A549 (cell line): ENCODE measurements at regions of chr9 and their contacts with region 1.

Region 1: GRCh38 chr9:35882263-35882848 is 12.2 kb upstream of the OR13J1 start:
- DNase-seq: peak; percentile 76 to 87
- ATAC-seq: peak; percentile 90 to 96; a peak in 5 of 6 replicates
- H3K4me3 ChIP-seq: no peak overlapping the region
- H3K27ac ChIP-seq: no peak overlapping the region
- H3K4me1 ChIP-seq: peaks cover 4% of the 10 kb centered on the region; the same call in 1 of the 3 replicates
- CTCF ChIP-seq: peak; percentile 97
- EP300 ChIP-seq: no peak
- POLR2A ChIP-seq: no peak
- RAD21 ChIP-seq: peak; percentile 86 to 87

Region 2: GRCh38 chr9:35732122-35732799 is 150.1 kb before region 1 on chr9 and contains the starts of genes CREB3 and TLN1:
- CTCF ChIA-PET with region 1: interaction called, 11 read pairs
- POLR2A ChIA-PET with region 1: interaction called, 3 read pairs
- DNase-seq: peak; percentile 98 to 99
- ATAC-seq: peak; percentile 82 to 93
- H3K4me3 ChIP-seq: peak within 1 kb of the TSS; percentile 87
- H3K27ac ChIP-seq: peak within 1 kb of the TSS; percentile 95 to 96
- H3K4me1 ChIP-seq: peaks cover 52% of the 10 kb centered on the region
- CTCF ChIP-seq: peak; percentile 40
- EP300 ChIP-seq: no peak
- POLR2A ChIP-seq: peak; percentile 64
- RAD21 ChIP-seq: peak in 1 of 2 experiments; percentile 36; a peak in 2 of 5 replicates
- polyA plus RNA-seq, gene CREB3: 33.3 and 36.0 TPM in 2 replicates
- polyA plus RNA-seq, gene TLN1: 65.5 and 72.1 TPM in 2 replicates

Region 3: DNA sequence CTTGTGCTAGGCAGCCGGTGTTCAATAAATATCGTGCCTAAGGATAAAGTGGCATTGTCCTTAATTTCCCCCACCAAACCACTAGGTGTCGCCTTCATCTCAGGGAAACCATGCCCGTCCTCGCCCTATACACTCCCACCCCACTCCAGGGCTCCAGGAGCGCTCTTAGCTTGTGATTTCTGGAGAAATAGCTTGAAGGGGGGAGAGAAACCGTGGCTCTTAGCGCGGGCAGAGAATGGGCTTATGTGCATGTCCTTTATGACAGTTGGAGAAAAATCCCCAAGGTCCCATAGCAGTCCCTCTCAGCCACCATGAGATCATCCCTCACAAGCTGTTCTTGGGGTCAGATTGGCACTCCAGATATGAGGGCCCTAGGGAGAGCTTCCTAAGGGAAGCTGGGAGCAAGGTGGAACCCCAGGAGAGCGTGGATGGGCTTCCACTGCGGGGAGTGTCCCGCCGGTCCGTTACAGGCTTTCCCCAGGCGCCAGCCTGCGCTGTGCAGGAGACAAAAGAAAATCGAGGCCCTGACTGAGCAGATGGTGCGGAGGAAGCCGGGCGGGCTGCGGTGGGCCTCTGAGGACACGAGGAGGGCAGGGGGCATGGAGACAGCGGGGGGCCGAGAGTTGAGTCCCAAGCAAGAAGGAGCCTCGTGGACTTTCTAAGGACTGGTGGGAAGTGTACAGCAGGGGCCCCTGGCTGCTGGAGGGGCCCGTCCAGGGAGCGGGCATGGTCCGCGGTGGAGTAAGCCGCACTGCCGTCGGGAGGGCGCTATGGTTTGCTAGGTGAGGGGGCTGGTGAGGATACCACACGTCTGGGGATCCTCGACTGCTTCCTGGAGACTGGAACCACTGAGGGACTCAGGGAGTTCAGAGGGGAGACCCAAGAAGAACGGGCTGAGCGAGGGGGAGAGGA is 91.7 kb before region 1 on chr9:
- CTCF ChIA-PET with region 1: interaction called, 66 read pairs
- POLR2A ChIA-PET with region 1: interaction called, 4 read pairs
- DNase-seq: peak; percentile 65 to 85
- ATAC-seq: peak; percentile 87 to 97
- H3K4me3 ChIP-seq: no peak overlapping the region
- H3K27ac ChIP-seq: peak overlapping the region in 1 of 2 experiments; percentile 22; a peak in 1 of 6 replicates
- H3K4me1 ChIP-seq: peaks cover 9% of the 10 kb centered on the region
- CTCF ChIP-seq: peak; percentile 91
- EP300 ChIP-seq: no peak
- POLR2A ChIP-seq: no peak
- RAD21 ChIP-seq: peak; percentile 85 to 92

Region 4: DNA sequence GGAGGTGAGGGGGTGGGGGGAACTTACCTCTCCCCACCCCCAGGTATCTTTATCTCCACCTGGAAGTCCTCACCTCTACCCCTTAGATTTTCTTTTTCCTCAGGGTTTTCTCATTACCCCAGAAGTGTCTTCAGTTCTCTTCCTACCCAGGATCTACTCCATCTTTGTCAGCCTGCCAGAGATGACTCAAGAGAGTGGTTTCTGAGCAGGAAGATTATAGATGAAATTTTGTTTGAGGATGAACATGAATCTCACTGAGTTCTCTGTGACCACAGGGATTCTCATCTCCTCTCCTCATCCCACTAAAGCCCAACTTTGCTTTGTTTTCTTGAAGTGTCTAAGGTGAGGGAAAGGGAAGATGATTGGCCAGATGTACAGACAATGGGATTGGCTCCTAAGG is 62.3 kb before region 1 on chr9:
- CTCF ChIA-PET with region 1: interaction called, 28 read pairs
- POLR2A ChIA-PET with region 1: no interaction called
- DNase-seq: no peak
- ATAC-seq: no peak
- H3K4me3 ChIP-seq: no peak overlapping the region
- H3K27ac ChIP-seq: no peak overlapping the region
- H3K4me1 ChIP-seq: no peaks in the 10 kb centered on the region
- CTCF ChIP-seq: no peak
- EP300 ChIP-seq: no peak
- POLR2A ChIP-seq: no peak
- RAD21 ChIP-seq: no peak

Region 5: DNA sequence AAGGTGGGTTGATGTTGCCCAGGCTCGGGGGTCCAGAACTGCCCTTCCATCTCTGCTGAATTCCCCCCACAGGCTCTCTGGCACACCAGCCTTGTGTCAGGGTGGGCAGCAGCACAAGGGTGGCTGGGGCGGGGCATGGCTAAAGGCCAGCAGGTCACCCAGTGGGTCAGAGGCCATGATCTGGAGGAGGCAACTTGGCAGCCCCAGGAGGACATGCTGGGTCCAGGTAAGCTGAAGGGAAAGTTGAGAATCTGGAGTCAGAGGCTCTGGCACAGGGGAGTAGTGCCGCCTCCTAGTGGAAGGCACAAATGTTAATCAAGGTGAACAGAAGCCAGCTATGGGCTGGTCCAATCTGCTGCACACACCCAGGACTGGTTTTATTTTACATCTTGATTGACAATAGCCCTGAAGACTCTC is 47.1 kb before region 1 on chr9:
- CTCF ChIA-PET with region 1: interaction called, 14 read pairs
- POLR2A ChIA-PET with region 1: no interaction called
- DNase-seq: no peak
- ATAC-seq: peak in 1 of 2 experiments; percentile 75; a peak in 3 of 6 replicates
- H3K4me3 ChIP-seq: no peak overlapping the region
- H3K27ac ChIP-seq: no peak overlapping the region
- H3K4me1 ChIP-seq: no peaks in the 10 kb centered on the region
- CTCF ChIP-seq: no peak; the same call in 2 of the 3 replicates
- EP300 ChIP-seq: no peak
- POLR2A ChIP-seq: no peak
- RAD21 ChIP-seq: 0 out of 5 replicates have a peak, but pooled peaks of 1 of the 2 experiments have one; percentile 22

Region 6: DNA sequence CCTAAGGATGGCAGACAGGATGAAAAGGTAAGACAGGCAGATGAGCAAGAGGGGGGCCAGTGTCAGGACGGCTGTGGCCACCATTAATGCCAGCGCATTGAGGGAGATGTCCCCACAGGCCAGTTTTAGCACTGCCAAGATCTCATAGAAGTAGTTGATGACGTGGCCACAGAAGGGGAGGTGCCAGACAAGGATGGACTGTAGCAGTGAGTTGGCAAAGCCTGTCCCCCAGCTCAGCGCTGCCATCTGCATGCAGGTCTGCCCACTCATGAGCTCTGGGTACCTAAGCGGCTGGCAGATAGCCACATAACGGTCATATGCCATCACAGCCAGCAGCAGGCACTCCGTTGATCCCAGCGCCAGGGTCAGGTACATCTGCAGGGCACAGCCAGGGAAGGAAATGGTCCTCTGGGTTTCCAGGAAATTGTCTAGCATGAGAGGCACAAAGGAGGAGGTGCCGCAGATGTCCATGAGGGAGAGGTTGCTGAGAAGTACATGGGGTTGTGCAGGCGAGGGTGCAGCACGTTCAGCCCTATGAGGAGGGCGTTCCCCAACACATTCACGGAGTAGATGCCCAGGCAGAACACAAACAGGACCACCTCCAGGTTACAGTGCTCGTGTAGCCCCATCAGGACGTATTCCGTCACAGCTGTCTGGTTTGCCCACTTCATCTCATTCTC is 22.9 kb before region 1 on chr9:
- CTCF ChIA-PET with region 1: interaction called, 36 read pairs
- POLR2A ChIA-PET with region 1: no interaction called
- DNase-seq: peak; percentile 29 to 42
- ATAC-seq: peak; percentile 66 to 74
- H3K4me3 ChIP-seq: no peak overlapping the region
- H3K27ac ChIP-seq: no peak overlapping the region
- H3K4me1 ChIP-seq: no peaks in the 10 kb centered on the region
- CTCF ChIP-seq: no peak
- EP300 ChIP-seq: no peak
- POLR2A ChIP-seq: no peak
- RAD21 ChIP-seq: no peak

Region 7: GRCh38 chr9:35903049-35903448 is 20.7 kb after region 1 on chr9:
- CTCF ChIA-PET with region 1: interaction called, 19 read pairs
- POLR2A ChIA-PET with region 1: no interaction called
- DNase-seq: peak; percentile 74 to 79
- ATAC-seq: peak in 1 of 2 experiments; percentile 17; a peak in 1 of 6 replicates
- H3K4me3 ChIP-seq: no peak overlapping the region
- H3K27ac ChIP-seq: peak overlapping the region in 1 of 2 experiments; percentile 25; a peak in 2 of 6 replicates
- H3K4me1 ChIP-seq: peaks cover 38% of the 10 kb centered on the region
- CTCF ChIP-seq: peak; percentile 88
- EP300 ChIP-seq: no peak
- POLR2A ChIP-seq: no peak
- RAD21 ChIP-seq: peak; percentile 85 to 86